ENCODE measurements at regions of chr2 and their contacts with region 1.

Region 1: DNA sequence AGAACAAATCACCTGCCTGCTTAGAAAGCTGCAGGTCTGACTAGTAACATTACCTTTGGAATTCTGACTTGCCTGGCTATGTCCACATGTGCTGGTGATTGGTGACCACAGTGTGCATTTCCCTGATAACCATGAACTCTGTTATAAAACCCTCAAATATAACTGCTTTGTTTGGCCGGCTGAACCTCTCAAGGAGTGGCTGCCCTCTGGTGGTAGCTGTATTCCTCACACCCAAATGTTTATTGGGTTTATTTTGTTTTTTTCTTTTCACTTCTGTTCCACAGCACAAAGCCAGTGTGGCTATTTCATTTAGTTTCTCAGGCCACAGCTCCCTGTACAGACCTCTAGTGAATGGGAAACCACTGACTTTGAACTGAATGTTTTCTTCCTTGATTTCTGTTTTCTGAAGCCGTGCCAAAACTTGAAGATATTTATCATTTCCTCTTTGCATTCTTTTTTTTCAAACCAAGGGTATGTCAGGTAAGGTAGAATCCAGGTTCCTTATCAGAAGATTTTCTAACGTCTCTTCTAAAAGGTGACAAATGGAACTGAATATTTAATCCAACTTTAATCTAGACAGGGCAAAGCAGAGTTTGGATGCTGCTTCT is 549.0 kb upstream of the VRK2 start:
- DNase-seq: peak in 2 of 3 donors; percentile 10 to 58
- ATAC-seq: peak; percentile 68
- H3K4me3 ChIP-seq: no peak overlapping the region
- H3K4me1 ChIP-seq: no peaks in the 10 kb centered on the region
- CTCF ChIP-seq: peak; percentile 35

Region 2: DNA sequence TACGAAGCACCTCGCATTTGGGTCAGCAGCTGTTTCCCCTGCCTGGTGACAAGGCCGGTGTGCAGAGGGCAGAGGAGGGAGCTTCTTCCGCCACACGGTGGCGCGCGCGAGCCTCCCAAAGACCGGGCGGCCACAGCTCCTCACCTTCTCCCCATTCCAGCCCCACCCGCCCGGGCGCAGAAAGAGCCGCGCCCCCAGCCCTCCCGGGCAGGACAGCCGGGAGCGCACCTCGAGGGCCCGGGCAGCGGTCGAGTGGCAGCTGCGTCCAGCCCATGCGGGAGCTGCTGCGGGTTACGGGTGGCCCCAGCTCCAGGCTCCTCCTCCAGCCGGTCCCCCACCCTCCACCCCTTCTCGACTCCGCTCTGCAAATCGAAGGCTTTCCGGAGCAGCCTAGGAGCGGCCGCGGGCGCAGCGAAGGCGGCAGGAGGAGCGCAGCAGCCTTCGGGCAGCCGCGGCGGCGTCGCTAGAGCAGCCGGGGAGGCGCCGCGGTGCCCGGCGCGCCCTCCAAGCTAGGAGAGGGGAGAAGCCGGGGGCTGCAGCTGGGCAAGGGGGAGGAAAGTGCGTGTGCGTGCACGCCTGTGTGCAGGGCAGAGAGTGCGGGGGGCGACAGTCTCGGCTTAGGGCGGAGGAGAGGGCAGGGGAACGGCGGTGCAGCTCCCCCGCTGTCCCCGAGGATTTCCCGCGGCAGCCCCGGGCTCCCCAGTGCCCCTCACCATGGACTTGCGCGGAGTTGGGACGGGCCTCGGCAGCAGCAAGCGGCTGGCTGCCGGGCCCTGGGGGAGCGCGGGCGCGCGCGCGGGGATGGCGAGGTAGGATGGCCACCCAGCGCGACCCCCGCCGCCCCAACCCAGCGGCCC is 1313.7 kb before region 1 on chr2 and contains the start of gene CCDC85A:
- intact Hi-C with region 1: loop called in 1 of 2 experiments (anchors 10 kb)
- DNase-seq: peak; percentile 77 to 90 (median 89)
- ATAC-seq: peak; percentile 93
- H3K4me3 ChIP-seq: no peak within 1 kb of the TSS
- H3K4me1 ChIP-seq: peaks cover 22% of the 10 kb centered on the region
- CTCF ChIP-seq: peak; percentile 84
- total RNA-seq, gene CCDC85A: 0.41 to 2.7 (median 0.49) TPM

Region 3: GRCh38 chr2:57373530-57373929 is 124.1 kb before region 1 on chr2:
- intact Hi-C with region 1: no loop called
- DNase-seq: no peak
- ATAC-seq: no peak
- H3K4me3 ChIP-seq: no peak overlapping the region
- H3K4me1 ChIP-seq: no peaks in the 10 kb centered on the region
- CTCF ChIP-seq: no peak

Measured in mucosa of descending colon (tissue), 3 donors.